Endothelial cell of umbilical vein (primary cell): ENCODE measurements at regions of chr19 and their contacts with region 1.

Region 1: DNA sequence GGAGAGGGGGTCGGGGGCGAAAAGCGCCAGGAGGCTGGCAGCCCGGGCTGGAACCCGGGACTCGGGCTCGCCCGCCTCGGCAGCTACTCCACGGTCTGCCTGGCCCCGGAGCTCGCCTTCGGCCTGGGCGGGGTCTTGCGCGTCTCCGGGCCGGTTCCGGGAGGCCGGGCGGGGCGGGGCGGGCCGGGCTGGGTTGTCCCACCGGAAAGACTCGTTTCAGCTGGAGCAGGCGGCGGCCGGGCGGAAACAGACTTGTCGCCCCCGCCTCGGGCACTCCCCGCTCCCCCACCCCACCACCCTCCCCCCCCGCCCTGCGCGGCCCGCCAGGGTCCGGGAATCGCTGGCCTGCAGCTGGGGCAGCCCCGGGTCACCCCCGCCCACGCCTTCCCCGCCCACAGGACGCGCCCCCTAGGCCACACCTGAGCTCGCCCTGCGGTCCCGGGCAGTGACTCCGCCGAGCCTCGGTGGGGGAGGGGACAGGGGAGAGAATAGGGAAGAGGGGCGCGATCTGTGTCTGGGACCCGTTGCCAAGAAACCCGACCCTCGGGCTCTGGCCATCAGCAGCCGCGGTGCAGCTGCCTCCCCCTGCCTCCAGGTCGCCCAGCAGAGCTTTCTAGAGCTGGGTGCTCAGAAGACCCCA is 109.4 kb downstream of the KCTD15 start:
- DNase-seq: peak; percentile 22
- H3K4me3 ChIP-seq: peak overlapping the region in 2 of 3 experiments; percentile 2 to 24
- H3K27ac ChIP-seq: peak overlapping the region; percentile 83
- H3K4me1 ChIP-seq: peaks cover 20% of the 10 kb centered on the region
- H3K27me3 ChIP-seq: peaks cover 0 to 2% of the 10 kb centered on the region in 2 experiments
- CTCF ChIP-seq: no peak
- POLR2A ChIP-seq: no peak

Region 2: DNA sequence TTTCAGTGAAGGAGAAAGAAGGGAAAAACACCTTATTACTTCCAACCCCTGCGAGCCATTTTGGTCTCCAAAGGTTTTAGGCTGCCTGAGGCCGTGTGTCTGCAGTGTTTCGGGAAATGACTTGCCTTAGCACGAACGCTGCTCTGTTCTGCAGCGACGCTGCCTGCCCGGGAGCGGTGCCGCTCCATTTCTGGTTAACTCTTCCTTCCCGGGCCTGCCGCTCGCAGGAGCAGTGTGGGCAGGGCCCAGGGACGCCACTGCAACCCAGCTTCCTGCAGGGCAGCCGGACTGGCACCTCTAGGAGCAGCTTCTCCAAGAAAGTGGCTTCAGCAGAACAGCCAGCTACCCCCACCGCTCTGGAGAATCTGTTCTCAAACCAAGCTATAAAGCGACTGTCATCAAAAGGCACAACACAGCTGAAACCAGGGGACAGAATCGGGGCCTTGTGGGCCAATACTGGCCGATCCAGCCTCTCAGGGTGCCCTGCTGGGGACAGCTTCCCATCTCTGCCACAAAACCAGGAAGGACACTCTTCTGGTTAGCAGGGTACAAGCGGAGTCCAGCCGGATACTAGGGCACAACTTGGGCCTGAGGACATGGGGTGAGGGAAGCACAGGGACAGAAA is 37.2 kb before region 1 on chr19:
- CTCF ChIA-PET with region 1: interaction called, 3 read pairs
- POLR2A ChIA-PET with region 1: no interaction called
- dilution Hi-C with region 1: no loop called
- intact Hi-C with region 1: loop called (anchors 5 kb)
- DNase-seq: peak; percentile 43
- H3K4me3 ChIP-seq: peak overlapping the region in 1 of 3 experiments; percentile 14
- H3K27ac ChIP-seq: no peak overlapping the region
- H3K4me1 ChIP-seq: peaks cover 7% of the 10 kb centered on the region
- H3K27me3 ChIP-seq: peaks cover 2 to 3% of the 10 kb centered on the region in 2 experiments
- CTCF ChIP-seq: no peak
- POLR2A ChIP-seq: no peak

Region 3: GRCh38 chr19:33956941-33957340 is 50.9 kb after region 1 on chr19:
- CTCF ChIA-PET with region 1: no interaction called
- POLR2A ChIA-PET with region 1: no interaction called
- dilution Hi-C with region 1: no loop called
- intact Hi-C with region 1: no loop called
- DNase-seq: no peak
- H3K4me3 ChIP-seq: no peak overlapping the region
- H3K27ac ChIP-seq: no peak overlapping the region
- H3K4me1 ChIP-seq: no peaks in the 10 kb centered on the region
- H3K27me3 ChIP-seq: no peaks in the 10 kb centered on the region
- CTCF ChIP-seq: no peak
- POLR2A ChIP-seq: no peak